B cell (primary cell): ENCODE measurements at regions of chr11 and their contacts with region 1.

Region 1: GRCh38 chr11:111586388-111586831 is 15.8 kb upstream of the SIK2 start:
- DNase-seq: peak; percentile 75
- ATAC-seq: peak; percentile 57
- H3K4me3 ChIP-seq: no peak overlapping the region
- H3K4me3 Mint-ChIP-seq: no peak overlapping the region
- H3K27ac ChIP-seq: no peak overlapping the region
- H3K27ac Mint-ChIP-seq: no peak overlapping the region
- H3K4me1 ChIP-seq: no peaks in the 10 kb centered on the region
- H3K4me1 Mint-ChIP-seq: peaks cover 5% of the 10 kb centered on the region
- H3K27me3 ChIP-seq: no peaks in the 10 kb centered on the region
- H3K27me3 Mint-ChIP-seq: no peaks in the 10 kb centered on the region
- CTCF ChIP-seq: peak; percentile 85

Region 2: GRCh38 chr11:110858547-110858921 is 727.9 kb before region 1 on chr11:
- CTCF ChIA-PET with region 1: no interaction called
- POLR2A ChIA-PET with region 1: no interaction called
- intact Hi-C with region 1: no loop called
- DNase-seq: no peak
- ATAC-seq: peak; percentile 39
- H3K4me3 ChIP-seq: no peak overlapping the region
- H3K4me3 Mint-ChIP-seq: no peak overlapping the region
- H3K27ac ChIP-seq: no peak overlapping the region
- H3K27ac Mint-ChIP-seq: no peak overlapping the region
- H3K4me1 ChIP-seq: peaks cover 12 to 20% of the 10 kb centered on the region in 2 donors
- H3K4me1 Mint-ChIP-seq: peaks cover 20% of the 10 kb centered on the region
- H3K27me3 ChIP-seq: no peaks in the 10 kb centered on the region
- H3K27me3 Mint-ChIP-seq: peaks cover 8% of the 10 kb centered on the region
- CTCF ChIP-seq: no peak

Region 3: DNA sequence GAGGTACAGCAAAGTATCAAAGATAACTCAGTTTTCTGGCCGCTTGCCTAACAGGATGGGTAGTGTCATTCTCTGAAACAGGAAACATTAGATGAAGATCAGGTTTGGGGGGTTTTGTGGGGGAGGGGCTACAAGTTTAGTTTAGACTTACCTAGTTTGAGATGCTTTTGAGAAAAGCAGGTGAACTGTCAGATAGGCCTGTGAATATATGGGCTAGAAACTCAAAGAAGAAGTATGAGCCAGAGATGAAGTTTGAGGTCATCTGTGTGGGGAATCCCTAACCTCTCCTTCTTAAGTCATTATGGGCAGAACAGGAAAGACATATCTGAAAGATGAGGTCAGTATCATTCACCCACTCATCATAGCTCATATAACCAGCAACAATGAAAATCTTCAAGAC is 59.9 kb before region 1 on chr11:
- CTCF ChIA-PET with region 1: no interaction called
- POLR2A ChIA-PET with region 1: no interaction called
- intact Hi-C with region 1: no loop called
- DNase-seq: no peak
- ATAC-seq: no peak
- H3K4me3 ChIP-seq: no peak overlapping the region
- H3K4me3 Mint-ChIP-seq: no peak overlapping the region
- H3K27ac ChIP-seq: no peak overlapping the region
- H3K27ac Mint-ChIP-seq: no peak overlapping the region
- H3K4me1 ChIP-seq: no peaks in the 10 kb centered on the region
- H3K4me1 Mint-ChIP-seq: no peaks in the 10 kb centered on the region
- H3K27me3 ChIP-seq: peaks cover 0 to 7% (median 0%) of the 10 kb centered on the region in 4 experiments
- H3K27me3 Mint-ChIP-seq: peaks cover 24% of the 10 kb centered on the region
- CTCF ChIP-seq: no peak

Region 4: DNA sequence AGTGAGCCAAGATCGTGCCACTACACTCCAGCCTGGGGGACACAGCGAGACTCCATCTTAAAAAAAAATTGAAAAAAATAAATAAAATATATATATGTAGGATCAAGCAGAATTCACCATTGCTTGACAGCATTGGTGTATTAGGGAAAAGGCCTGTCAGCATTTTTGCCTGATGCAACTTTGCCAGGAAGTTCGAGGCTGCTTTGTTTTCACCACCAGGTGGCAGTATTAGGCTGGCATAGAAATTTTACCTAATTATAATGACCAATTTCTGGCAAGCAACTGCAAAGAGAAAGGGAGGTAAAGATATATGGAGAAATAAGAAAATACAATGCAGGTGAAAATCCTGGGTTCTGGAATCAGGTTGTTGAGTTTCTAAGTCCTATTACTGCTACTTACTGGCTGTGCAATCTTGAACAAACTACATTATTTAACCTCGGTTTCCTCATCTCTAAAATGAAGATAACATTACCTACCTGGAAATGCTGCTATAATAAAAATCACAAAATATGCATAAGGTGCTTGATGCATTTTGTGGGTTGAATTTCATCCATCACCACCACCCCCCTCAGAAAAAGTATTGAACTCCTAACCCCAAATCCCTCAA is 21.2 kb before region 1 on chr11:
- CTCF ChIA-PET with region 1: interaction called, 17 read pairs
- POLR2A ChIA-PET with region 1: no interaction called
- intact Hi-C with region 1: loop called (anchors 1 kb)
- DNase-seq: peak; percentile 72
- ATAC-seq: no peak
- H3K4me3 ChIP-seq: no peak overlapping the region
- H3K4me3 Mint-ChIP-seq: no peak overlapping the region
- H3K27ac ChIP-seq: no peak overlapping the region
- H3K27ac Mint-ChIP-seq: no peak overlapping the region
- H3K4me1 ChIP-seq: no peaks in the 10 kb centered on the region
- H3K4me1 Mint-ChIP-seq: no peaks in the 10 kb centered on the region
- H3K27me3 ChIP-seq: no peaks in the 10 kb centered on the region
- H3K27me3 Mint-ChIP-seq: peaks cover 8% of the 10 kb centered on the region
- CTCF ChIP-seq: peak; percentile 94

Region 5: DNA sequence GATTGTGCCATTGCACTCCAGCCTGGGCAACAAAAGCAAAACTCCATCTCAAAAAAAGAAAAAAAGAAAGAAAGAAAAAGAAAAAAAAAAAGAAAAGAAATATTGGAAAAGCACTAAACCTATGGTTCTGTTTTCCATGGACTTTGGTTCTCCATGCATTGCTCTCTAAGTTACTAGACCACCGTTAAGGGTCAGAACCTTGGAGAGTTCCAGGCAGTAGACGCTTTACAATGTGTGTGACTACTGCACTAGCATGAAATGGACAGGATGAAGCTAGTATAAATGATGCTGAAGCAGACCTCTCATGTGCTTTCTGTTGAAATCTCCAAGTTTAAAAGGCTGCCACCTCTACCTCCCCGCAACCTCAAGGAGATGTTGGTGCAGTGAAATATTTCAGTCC is 79.4 kb after region 1 on chr11:
- CTCF ChIA-PET with region 1: no interaction called
- POLR2A ChIA-PET with region 1: no interaction called
- intact Hi-C with region 1: no loop called
- DNase-seq: no peak
- ATAC-seq: no peak
- H3K4me3 ChIP-seq: no peak overlapping the region
- H3K4me3 Mint-ChIP-seq: no peak overlapping the region
- H3K27ac ChIP-seq: no peak overlapping the region
- H3K27ac Mint-ChIP-seq: no peak overlapping the region
- H3K4me1 ChIP-seq: no peaks in the 10 kb centered on the region
- H3K4me1 Mint-ChIP-seq: no peaks in the 10 kb centered on the region
- H3K27me3 ChIP-seq: no peaks in the 10 kb centered on the region
- H3K27me3 Mint-ChIP-seq: no peaks in the 10 kb centered on the region
- CTCF ChIP-seq: no peak